ENCODE measurements at regions of chr5 and their contacts with region 1.

Region 1: DNA sequence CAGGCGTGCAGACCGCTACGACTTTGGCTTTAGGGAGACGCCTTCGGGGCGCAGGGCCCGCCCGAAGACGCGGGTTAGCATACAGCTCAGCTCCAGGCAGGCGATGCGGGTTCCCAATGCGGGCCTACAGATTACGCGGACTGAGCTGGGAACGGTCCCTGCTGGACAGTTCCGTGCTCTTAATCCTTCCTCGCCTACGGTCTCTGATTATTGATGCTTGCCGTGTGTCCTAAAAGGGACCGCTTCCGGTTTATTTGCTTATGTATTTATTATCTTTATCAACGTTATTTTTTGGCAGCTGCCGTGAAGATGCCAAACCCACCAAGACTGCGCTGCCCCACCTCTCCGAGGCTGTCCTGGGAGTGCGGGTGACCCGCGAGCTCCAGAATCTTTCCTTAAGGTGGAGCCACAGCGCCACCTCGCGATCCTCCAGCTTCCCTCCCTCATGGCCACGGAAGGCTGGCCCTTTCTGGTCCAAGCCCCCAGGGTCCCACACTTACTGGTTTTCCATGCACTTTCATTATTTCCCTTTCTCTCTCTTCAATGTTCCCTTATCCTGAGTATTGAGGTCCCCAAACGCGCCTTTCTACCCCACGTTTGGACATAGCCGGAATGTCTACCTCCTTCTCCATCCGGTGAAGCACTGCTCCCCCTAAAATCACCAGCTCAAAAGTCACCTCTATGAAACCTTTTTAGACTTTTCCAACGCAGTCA is 7.0 kb upstream of the EBF1 start:
- DNase-seq: peak; percentile 77 to 91 (median 86)
- H3K4me3 ChIP-seq: peak overlapping the region; percentile 28
- H3K27ac ChIP-seq: no peak overlapping the region
- H3K4me1 ChIP-seq: peaks cover 9% of the 10 kb centered on the region
- H3K27me3 ChIP-seq: no peaks in the 10 kb centered on the region
- CTCF ChIP-seq: peak; percentile 64 to 96 (median 89)
- EP300 ChIP-seq: no peak
- POLR2A ChIP-seq: peak; percentile 25

Region 2: DNA sequence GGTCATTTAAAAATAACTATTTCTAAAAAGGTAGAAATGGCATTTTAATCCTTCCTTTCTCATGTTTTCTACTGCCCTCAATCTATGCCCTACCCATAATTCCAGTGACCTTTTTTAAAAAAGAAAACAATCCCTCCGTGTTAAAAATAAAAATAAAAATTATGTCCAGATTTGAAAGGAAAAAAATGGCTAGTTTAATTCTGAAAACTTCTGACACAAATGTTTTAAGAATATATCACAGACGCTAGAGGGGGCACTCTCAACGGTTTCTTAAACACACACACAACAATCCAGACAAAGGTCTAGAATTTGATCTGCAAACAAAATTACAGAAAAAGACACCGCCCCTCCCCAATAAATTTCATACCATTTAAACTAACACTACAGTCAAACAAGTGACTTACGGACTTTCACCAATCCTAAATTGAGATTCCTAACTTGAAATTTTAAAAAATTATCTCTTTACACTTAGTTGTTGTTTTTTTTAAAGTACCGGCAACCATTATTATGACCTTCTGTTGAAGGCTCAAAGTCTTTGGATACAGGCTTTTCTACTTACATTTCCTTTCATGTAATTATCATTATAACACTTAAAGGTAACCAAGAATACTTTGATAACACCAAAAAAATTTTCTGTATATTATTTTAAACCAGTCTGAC is 1286.0 kb before region 1 on chr5:
- intact Hi-C with region 1: loop called in 2 of 4 experiments (anchors 10 kb)
- DNase-seq: peak in 1 of 5 donors; percentile 28
- H3K4me3 ChIP-seq: no peak overlapping the region
- H3K27ac ChIP-seq: peak overlapping the region in 1 of 2 donors; percentile 4
- H3K4me1 ChIP-seq: peaks cover 8% of the 10 kb centered on the region
- H3K27me3 ChIP-seq: no peaks in the 10 kb centered on the region
- CTCF ChIP-seq: peak; percentile 21 to 61 (median 43)
- EP300 ChIP-seq: no peak
- POLR2A ChIP-seq: no peak

Region 3: DNA sequence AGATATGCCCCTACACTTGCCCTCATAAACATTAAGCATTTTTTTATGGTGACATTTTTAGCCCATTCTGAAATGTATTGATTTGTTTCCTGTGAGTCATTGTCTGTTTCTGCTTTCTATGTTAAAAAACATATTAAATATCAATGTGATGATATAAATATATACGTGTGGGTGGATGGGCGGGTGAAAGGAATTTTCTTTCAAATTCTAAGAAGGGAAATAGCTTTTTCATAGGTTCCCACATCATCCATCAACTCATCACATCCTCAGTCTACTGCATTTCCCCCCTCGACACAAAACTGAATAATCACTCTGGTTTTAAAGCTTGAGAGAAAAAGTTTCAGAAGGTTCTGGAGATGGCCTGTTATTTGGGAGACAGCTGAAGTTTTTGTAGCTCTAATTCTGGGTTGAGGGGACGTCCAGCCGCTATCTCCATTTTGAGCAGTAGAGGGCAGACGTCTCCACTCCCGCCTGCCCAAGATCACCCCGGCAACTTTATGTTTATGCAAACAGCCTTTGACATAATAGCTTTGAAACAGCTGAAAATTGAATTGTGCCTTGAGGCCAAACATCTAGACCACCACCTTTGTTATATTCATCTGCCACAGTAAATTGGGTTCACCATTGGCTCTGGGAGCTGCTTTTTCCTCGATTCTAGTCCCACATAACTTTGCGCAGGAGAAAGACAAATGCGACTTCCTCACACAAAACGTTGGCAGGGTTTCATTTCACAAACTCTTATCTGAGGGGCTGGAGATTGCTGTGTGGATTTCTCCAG is 1031.5 kb before region 1 on chr5:
- intact Hi-C with region 1: loop called in 2 of 4 experiments (anchors 10 kb)
- DNase-seq: peak; percentile 47 to 77 (median 69)
- H3K4me3 ChIP-seq: peak overlapping the region; percentile 32
- H3K27ac ChIP-seq: no peak overlapping the region
- H3K4me1 ChIP-seq: peaks cover 4% of the 10 kb centered on the region
- H3K27me3 ChIP-seq: no peaks in the 10 kb centered on the region
- CTCF ChIP-seq: peak; percentile 43 to 69 (median 65)
- EP300 ChIP-seq: no peak
- POLR2A ChIP-seq: no peak

Region 4: GRCh38 chr5:158463938-158464337 is 642.8 kb before region 1 on chr5:
- intact Hi-C with region 1: loop called in 1 of 4 experiments (anchors 10 kb)
- DNase-seq: peak in 3 of 5 donors; percentile 38 to 85 (median 48)
- H3K4me3 ChIP-seq: no peak overlapping the region
- H3K27ac ChIP-seq: no peak overlapping the region
- H3K4me1 ChIP-seq: peaks cover 13% of the 10 kb centered on the region
- H3K27me3 ChIP-seq: no peaks in the 10 kb centered on the region
- CTCF ChIP-seq: no peak
- EP300 ChIP-seq: peak; percentile 83
- POLR2A ChIP-seq: no peak

Region 5: DNA sequence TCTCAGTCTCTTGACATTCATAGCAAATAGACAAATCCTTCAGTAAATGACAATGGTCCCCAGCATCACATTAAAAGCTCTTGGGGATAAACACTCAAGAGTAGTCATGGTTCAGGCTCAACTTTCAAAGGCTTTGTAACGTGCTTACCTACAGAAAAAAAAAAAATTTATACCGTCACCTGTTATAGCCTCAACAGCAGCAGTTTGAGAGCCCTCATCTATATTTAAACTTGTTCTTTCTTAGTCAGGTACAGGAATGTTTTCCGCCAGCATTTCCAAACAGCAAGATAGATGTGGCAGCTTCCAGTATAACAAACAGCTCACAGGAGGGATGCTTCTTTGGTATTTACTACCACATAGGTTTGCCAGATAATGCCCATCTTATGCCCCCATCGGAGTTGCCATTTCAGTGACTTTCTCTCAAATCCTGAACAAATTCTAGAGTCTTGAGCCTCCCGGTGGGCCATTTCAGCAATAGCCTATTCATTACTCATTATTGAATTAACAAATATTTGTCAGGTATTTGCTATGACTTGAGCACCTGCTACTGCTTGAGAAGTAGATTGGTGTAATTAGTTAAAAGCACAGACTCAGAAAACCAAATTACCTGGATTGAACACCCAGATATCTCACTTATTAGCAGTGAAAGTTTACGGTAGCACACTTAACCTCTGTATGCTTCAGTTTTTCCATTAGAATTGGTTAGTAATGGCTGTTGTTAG is 477.0 kb before region 1 on chr5:
- intact Hi-C with region 1: no loop called
- DNase-seq: no peak
- H3K4me3 ChIP-seq: no peak overlapping the region
- H3K27ac ChIP-seq: no peak overlapping the region
- H3K4me1 ChIP-seq: no peaks in the 10 kb centered on the region
- H3K27me3 ChIP-seq: no peaks in the 10 kb centered on the region
- CTCF ChIP-seq: no peak
- EP300 ChIP-seq: no peak
- POLR2A ChIP-seq: no peak

Region 6: GRCh38 chr5:158770506-158770905 is 336.2 kb before region 1 on chr5:
- intact Hi-C with region 1: loop called in 1 of 4 experiments (anchors 10 kb)
- DNase-seq: no peak
- H3K4me3 ChIP-seq: no peak overlapping the region
- H3K27ac ChIP-seq: no peak overlapping the region
- H3K4me1 ChIP-seq: peaks cover 10% of the 10 kb centered on the region
- H3K27me3 ChIP-seq: no peaks in the 10 kb centered on the region
- CTCF ChIP-seq: no peak
- EP300 ChIP-seq: no peak
- POLR2A ChIP-seq: no peak